ENCODE measurements at regions of chr2 and their contacts with region 1.

Region 1: DNA sequence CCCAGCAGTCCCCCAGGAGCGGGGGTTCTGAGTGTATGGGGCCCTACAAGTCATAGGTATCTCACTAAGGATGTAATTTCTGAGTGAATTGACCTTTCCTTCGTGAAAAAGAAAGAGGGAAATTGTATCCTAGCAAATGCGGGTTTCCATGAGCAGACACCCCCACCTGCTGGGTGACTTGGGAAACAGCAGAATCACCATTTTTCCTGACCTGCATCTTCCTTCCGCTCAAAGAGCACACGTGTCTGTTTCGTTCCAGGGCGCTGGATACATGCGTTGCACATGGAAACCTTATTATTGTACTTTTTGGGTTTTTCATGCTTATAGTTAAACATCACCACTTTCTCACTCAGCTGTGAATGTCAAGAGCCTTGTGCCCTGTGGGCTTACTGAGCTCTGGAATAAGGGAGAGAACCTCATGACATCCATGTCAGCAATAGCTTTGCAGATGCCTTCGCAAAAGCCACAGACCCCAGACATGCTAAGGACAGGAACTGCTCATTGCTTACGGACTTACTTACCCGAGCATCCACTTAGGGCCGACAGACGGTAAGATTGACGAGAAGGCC is 132.8 kb downstream of the TPO start:
- DNase-seq: no peak
- ATAC-seq: peak; percentile 25
- H3K4me3 ChIP-seq: no peak overlapping the region
- H3K27ac ChIP-seq: no peak overlapping the region
- H3K4me1 ChIP-seq: peaks cover 7% of the 10 kb centered on the region
- H3K27me3 ChIP-seq: no peaks in the 10 kb centered on the region
- CTCF ChIP-seq: peak; percentile 80

Region 2: DNA sequence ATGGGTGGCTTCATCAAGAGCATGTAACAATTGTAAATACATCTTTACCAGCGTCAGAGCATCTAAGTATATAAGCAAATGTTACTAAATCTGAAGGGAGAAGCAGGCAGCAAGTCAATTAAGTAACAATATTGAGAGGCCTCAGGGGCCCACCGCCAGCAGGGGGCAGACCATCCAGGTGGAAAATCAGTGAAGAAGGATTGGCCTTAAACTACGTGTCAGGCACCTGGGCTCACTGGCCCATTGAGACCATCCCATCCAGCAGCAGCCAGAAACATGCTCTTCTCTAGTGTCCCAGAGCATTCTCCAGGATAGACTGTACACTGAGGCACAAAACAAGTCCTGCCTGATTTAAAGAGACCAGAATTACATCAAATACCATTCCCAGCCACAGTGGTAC is 691.6 kb before region 1 on chr2:
- intact Hi-C with region 1: loop called (anchors 10 kb)
- DNase-seq: no peak
- ATAC-seq: peak; percentile 58
- H3K4me3 ChIP-seq: no peak overlapping the region
- H3K27ac ChIP-seq: no peak overlapping the region
- H3K4me1 ChIP-seq: no peaks in the 10 kb centered on the region
- H3K27me3 ChIP-seq: no peaks in the 10 kb centered on the region
- CTCF ChIP-seq: peak; percentile 61

Region 3: GRCh38 chr2:946073-946948 is 599.8 kb before region 1 on chr2:
- intact Hi-C with region 1: loop called (anchors 10 kb)
- DNase-seq: no peak
- ATAC-seq: no peak
- H3K4me3 ChIP-seq: no peak overlapping the region
- H3K27ac ChIP-seq: no peak overlapping the region
- H3K4me1 ChIP-seq: peaks cover 12% of the 10 kb centered on the region
- H3K27me3 ChIP-seq: peaks cover 31% of the 10 kb centered on the region
- CTCF ChIP-seq: no peak

Region 4: GRCh38 chr2:1328684-1329083 is 217.4 kb before region 1 on chr2:
- intact Hi-C with region 1: no loop called
- DNase-seq: no peak
- ATAC-seq: no peak
- H3K4me3 ChIP-seq: no peak overlapping the region
- H3K27ac ChIP-seq: no peak overlapping the region
- H3K4me1 ChIP-seq: no peaks in the 10 kb centered on the region
- H3K27me3 ChIP-seq: no peaks in the 10 kb centered on the region
- CTCF ChIP-seq: no peak

Region 5: DNA sequence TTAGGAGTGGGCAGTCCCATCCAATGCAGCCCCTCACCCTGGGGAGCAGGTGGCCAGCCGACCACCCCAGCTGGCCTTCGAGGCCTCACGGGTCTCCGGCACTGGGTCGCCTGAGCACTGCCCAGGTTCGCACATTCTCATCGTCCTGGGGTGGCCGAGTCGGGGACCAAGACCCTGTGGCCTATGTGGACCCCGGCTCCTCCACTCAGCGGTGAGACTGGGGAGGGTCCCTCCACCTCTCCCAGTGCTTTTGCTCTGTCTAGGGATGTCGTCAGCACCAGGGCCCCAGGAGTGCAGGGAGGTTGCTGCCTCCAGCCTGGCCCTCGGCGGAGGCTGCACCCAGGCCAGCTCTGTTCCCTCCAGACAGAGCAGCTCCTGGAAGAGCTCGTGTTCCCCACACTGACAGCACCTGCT is 43.2 kb before region 1 on chr2:
- intact Hi-C with region 1: no loop called
- DNase-seq: peak; percentile 53
- ATAC-seq: peak; percentile 42
- H3K4me3 ChIP-seq: no peak overlapping the region
- H3K27ac ChIP-seq: no peak overlapping the region
- H3K4me1 ChIP-seq: no peaks in the 10 kb centered on the region
- H3K27me3 ChIP-seq: no peaks in the 10 kb centered on the region
- CTCF ChIP-seq: no peak

Measured in upper lobe of right lung (tissue), 1 donor.